Activated CD8-positive, alpha-beta T cell treated with anti-CD3 and anti-CD28 coated beads for 36 hours (primary cell): ENCODE measurements at regions of chr10 and their contacts with region 1.

Region 1: GRCh38 chr10:72126184-72126871 is 38.0 kb upstream of the SPOCK2 start:
- DNase-seq: no peak
- ATAC-seq: no peak
- H3K4me3 Mint-ChIP-seq: no peak overlapping the region
- H3K27ac Mint-ChIP-seq: no peak overlapping the region
- H3K4me1 Mint-ChIP-seq: peaks cover 30% of the 10 kb centered on the region
- H3K27me3 Mint-ChIP-seq: no peaks in the 10 kb centered on the region
- CTCF ChIP-seq: peak; percentile 28

Region 2: DNA sequence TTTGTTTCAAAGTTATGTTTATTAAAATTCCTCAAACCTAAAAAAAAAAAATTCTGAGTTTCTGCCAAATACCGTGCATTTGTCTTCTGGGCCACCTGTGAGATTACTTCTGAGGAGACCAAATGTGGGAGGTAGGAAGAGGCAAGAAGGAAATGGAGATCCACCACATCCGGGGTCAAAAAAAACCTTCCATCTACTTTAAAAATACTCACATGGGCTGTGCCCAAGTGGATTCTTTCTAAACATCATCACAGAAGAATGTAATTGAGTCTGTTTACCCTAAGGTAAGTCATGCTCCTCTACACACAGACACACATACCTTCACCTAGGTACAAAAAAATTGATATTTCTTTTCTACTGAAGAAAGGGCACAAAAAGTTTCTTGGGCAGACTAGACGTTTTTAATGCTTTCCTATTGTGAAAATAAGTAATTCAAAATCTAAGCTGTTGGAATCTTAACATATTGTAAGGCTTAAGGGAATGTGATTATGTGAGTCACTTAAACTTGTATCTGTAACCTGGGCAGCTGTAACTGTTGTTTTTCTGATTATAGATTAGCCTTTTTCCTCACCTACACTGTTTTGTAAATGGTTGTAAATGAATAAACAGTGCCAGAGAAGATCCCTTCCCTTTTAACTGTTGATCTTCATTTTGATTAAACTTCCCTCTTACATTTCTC is 18.9 kb before region 1 on chr10:
- CTCF ChIA-PET with region 1: interaction called, 41 read pairs
- POLR2A ChIA-PET with region 1: interaction called, 3 read pairs
- intact Hi-C with region 1: no loop called
- DNase-seq: peak; percentile 56
- ATAC-seq: peak; percentile 56
- H3K4me3 Mint-ChIP-seq: peak overlapping the region; percentile 69
- H3K27ac Mint-ChIP-seq: peak overlapping the region; percentile 86
- H3K4me1 Mint-ChIP-seq: peaks cover 70% of the 10 kb centered on the region
- H3K27me3 Mint-ChIP-seq: no peaks in the 10 kb centered on the region
- CTCF ChIP-seq: no peak

Region 3: GRCh38 chr10:72114706-72115450 is 11.4 kb before region 1 on chr10:
- CTCF ChIA-PET with region 1: interaction called, 41 read pairs
- POLR2A ChIA-PET with region 1: no interaction called
- intact Hi-C with region 1: no loop called
- DNase-seq: no peak
- ATAC-seq: no peak
- H3K4me3 Mint-ChIP-seq: no peak overlapping the region
- H3K27ac Mint-ChIP-seq: no peak overlapping the region
- H3K4me1 Mint-ChIP-seq: peaks cover 28% of the 10 kb centered on the region
- H3K27me3 Mint-ChIP-seq: no peaks in the 10 kb centered on the region
- CTCF ChIP-seq: no peak